Activated CD4-positive, alpha-beta memory T cell treated with anti-CD3 and anti-CD28 coated beads for 36 hours (primary cell): ENCODE measurements at regions of chr6 and their contacts with region 1.

Region 1: DNA sequence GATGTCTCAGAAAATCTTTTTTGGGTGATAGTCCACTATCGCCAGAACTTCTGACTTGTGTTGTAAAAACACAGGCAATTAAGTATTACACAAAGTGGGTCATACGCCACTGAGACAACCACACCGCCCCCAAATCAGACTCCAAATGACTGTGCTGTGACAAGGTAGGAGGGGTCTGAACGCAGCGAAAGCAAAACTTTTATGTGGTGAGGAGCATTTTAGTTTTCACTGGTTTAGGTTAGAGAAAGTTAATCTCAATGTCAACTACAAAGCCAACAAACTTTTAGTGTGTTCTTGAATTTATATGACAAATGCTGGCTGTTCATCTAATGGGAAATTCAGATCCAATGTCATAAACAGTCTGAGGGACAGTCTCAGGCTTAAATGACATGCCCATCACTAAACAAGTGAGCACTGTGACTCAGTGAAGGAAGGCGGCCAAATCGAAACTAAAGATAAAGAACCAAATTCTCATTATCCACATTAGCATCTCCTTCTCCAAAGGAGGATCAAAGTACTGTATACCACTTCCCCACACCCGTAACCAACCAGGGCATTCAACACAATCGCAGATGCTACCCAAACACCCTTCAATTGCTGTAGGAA is 186.7 kb downstream of the GJA10 start:
- DNase-seq: peak; percentile 94
- H3K4me3 Mint-ChIP-seq: peak overlapping the region; percentile 86
- H3K27ac Mint-ChIP-seq: peak overlapping the region; percentile 92
- H3K4me1 Mint-ChIP-seq: peaks cover 91% of the 10 kb centered on the region
- H3K27me3 Mint-ChIP-seq: no peaks in the 10 kb centered on the region

Region 2: DNA sequence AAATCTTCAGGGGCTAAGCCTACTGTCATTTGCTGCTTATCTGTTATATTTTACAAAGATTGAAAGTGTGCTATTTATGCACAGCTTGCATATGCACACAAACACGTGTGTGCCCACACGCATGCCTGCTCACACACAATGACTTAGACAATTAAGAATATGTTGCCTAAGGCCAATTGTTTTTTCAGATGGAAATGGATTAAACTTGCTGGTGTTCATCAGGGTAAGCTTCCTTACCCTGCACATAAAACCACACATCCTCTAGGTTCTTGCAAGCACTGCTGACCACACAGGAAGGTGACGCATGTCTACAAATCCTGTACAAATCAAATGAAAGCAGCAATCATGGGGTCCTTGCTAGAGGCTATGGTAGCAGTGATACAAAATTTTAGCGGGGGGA is 128.3 kb before region 1 on chr6:
- CTCF ChIA-PET with region 1: interaction called, 4 read pairs
- POLR2A ChIA-PET with region 1: interaction called, 9 read pairs
- intact Hi-C with region 1: loop called (anchors 1 kb)
- DNase-seq: peak; percentile 72
- H3K4me3 Mint-ChIP-seq: peak overlapping the region; percentile 8
- H3K27ac Mint-ChIP-seq: peak overlapping the region; percentile 69
- H3K4me1 Mint-ChIP-seq: peaks cover 68% of the 10 kb centered on the region
- H3K27me3 Mint-ChIP-seq: no peaks in the 10 kb centered on the region

Region 3: GRCh38 chr6:90049295-90049694 is 31.7 kb before region 1 on chr6:
- CTCF ChIA-PET with region 1: no interaction called
- POLR2A ChIA-PET with region 1: interaction called, 5 read pairs
- intact Hi-C with region 1: loop called (anchors 1 kb)
- DNase-seq: peak; percentile 44
- H3K4me3 Mint-ChIP-seq: peak overlapping the region; percentile 18
- H3K27ac Mint-ChIP-seq: peak overlapping the region; percentile 89
- H3K4me1 Mint-ChIP-seq: peaks cover 51% of the 10 kb centered on the region
- H3K27me3 Mint-ChIP-seq: no peaks in the 10 kb centered on the region

Region 4: DNA sequence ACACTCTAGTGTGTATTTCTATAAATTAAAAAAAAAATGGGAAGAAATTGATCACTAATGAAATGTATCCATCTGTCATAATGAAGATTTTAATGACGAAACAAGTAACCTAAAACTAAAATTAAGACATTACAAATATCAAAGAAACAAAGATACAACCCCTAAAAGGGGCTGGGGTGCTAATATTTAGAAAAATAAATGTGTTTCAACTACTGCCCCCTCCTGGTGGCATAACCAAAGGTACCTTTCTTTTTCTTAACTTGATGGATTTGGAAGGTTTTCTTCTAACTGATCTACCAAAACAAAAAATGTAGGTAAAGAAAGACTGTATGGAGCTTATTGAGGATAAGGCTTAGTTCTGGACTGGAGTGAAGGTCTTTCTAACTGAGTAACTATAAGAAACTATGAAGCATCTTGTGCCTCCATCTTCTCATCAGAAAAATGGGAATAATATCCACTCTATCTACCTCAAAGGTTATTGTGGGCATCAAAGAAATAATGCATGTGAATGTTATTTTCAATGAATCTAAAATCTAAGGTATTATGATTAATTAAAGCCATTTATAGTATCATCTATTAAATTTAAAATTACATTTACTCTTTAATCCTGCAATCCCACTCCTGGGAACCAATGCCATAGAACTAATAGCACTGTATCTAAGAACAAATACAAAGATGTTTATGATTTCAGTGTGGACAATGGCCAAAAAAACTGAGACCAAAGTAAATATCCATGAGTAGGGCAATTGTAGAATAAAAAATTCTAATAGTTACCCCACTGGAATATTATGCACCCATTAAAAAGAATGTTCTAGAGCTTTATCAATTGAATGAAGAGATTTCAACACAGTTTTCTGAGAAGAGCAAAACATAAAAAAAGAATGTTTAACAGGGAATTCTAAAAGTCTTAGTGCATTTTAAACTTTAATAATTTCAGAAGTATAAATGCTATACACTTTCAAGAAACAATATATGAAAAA is 98.5 kb after region 1 on chr6:
- CTCF ChIA-PET with region 1: interaction called, 3 read pairs
- POLR2A ChIA-PET with region 1: no interaction called
- intact Hi-C with region 1: loop called (anchors 1 kb)
- DNase-seq: no peak
- H3K4me3 Mint-ChIP-seq: no peak overlapping the region
- H3K27ac Mint-ChIP-seq: no peak overlapping the region
- H3K4me1 Mint-ChIP-seq: peaks cover 59% of the 10 kb centered on the region
- H3K27me3 Mint-ChIP-seq: peaks cover 3% of the 10 kb centered on the region

Region 5: DNA sequence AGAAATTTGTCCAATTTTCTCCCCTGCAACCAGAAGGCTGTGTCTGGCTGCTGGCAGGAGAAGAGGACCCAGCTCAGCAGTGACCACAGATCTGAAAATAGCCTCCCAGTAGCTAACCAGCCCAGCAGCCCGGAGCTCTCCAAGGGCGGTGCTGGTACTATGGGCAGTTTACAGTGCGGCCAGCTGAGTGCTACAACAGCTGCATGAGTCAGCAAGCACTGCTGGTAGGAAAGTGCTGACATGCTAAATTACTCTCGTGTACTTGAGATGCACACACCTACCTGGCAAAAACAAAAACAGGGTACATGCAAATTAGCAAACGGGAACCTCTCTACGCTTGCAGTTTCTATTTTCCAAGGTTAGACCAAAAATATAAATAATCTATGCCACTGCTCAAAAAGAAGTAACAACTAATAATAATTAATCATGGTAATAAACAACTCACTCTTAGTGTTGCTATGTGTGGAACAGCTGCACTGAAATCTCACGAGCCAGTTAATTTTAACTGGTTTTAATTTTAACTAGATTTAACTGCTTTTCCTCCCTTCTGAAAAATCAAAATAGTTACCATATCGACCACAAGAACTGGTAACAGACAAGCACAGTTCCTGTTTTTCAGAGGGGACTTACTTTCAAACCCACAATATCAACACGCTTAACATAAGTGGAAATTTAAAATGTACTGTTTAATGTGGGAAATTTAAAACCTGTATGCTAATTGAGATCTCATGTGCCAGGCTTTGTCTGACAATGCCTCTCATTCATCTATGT is 204.8 kb after region 1 on chr6:
- CTCF ChIA-PET with region 1: interaction called, 4 read pairs
- POLR2A ChIA-PET with region 1: interaction called, 6 read pairs
- intact Hi-C with region 1: loop called (anchors 1 kb)
- DNase-seq: peak; percentile 75
- H3K4me3 Mint-ChIP-seq: peak overlapping the region; percentile 67
- H3K27ac Mint-ChIP-seq: peak overlapping the region; percentile 89
- H3K4me1 Mint-ChIP-seq: peaks cover 91% of the 10 kb centered on the region
- H3K27me3 Mint-ChIP-seq: no peaks in the 10 kb centered on the region

Region 6: DNA sequence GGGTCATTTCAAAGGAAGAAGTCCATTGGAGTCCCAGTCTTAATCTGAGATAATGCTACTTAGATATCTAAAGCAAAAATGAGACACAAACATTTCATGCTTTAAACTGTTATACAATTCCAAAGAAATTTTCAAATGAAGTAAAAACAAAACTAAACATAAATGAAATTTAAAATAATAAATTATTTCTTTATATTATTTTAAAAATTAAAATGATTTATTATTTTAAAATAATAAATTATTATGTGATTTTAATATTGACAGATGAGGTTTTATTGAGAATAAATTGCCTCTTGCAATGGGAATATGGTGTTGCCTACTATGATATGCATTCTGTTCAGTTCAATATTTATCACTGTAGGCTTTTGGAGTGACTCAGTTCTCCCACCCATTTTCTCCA is 309.4 kb after region 1 on chr6:
- CTCF ChIA-PET with region 1: no interaction called
- POLR2A ChIA-PET with region 1: no interaction called
- intact Hi-C with region 1: no loop called
- DNase-seq: no peak
- H3K4me3 Mint-ChIP-seq: no peak overlapping the region
- H3K27ac Mint-ChIP-seq: no peak overlapping the region
- H3K4me1 Mint-ChIP-seq: peaks cover 63% of the 10 kb centered on the region
- H3K27me3 Mint-ChIP-seq: no peaks in the 10 kb centered on the region

Region 7: DNA sequence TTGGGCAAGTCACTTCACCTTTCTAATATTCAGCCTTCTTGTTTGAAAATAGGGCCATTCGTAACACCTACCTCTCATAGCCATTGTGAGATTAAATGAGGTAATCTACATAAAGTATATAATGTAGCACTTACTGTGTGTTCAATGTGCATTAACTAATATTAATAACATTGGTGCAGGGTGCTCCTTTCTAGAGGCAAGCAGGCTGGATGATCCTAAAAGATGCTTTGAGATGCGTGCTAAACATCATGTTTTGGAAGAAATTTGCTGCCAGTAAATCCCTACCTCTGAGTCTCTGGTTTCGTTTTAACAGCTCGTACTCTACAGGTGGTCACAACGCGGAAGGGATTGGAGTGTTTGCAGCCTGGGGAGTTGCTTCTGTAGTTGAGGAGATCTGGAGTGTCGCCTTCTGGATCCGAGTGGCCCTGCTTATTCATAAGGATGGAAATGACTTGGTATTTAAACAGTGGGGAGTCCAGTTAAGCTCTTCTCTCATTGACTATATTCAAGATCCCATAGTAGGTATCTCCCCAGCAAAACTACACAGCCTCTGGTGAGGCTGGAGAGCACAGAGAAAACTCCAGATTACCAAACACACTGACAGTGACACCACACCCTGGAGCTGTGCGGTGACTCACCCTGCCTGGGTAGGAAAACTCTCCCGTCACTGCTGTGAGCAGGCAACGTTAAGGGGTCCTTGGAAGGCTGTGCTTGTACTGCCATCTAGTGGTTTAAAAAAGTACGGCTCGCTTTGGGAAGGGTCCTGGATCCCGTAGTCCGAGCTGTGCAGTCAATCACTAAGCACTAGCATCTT is 398.0 kb after region 1 on chr6:
- CTCF ChIA-PET with region 1: interaction called, 7 read pairs
- POLR2A ChIA-PET with region 1: interaction called, 4 read pairs
- intact Hi-C with region 1: loop called (anchors 2 kb)
- DNase-seq: peak; percentile 91
- H3K4me3 Mint-ChIP-seq: peak overlapping the region; percentile 3
- H3K27ac Mint-ChIP-seq: peak overlapping the region; percentile 66
- H3K4me1 Mint-ChIP-seq: peaks cover 58% of the 10 kb centered on the region
- H3K27me3 Mint-ChIP-seq: no peaks in the 10 kb centered on the region